ENCODE measurements at regions of chr11 and their contacts with region 1.

Region 1: DNA sequence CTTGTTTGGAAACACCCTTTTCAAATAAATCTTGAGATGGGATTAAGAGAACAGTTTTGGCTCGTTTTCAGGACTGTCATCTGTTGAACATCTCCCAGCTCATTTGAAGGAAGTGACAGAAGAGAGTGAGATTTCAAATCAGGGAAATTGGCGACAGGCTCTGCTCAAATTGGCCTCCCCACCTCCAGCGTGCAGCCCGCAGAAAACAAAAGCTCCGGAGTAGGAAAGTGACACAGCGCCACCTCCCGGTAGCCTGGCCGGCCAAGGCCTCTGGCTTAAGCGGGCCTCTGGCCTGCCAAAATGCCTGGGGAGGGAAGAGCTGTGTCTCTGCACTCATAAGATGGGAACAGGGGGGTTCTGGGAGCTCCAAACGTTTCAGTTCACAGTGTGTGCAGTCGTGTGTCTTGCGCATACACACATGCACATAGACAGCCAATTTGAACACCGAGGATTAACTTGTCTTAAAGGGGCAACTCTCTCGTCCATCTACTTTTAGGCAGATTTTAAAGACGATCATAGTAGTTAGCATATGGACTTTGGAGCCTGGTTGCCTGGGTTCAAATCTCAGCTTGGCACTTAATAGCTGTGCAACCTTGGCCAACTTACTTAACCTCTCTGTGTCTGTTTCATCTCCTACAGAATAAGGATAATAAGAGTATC is 132.7 kb upstream of the RCN1 start:
- DNase-seq: peak; percentile 21 to 61 (median 34)
- ATAC-seq: no peak
- H3K4me3 ChIP-seq: no peak overlapping the region
- H3K4me3 Mint-ChIP-seq: no peak overlapping the region
- H3K27ac ChIP-seq: no peak overlapping the region
- H3K27ac Mint-ChIP-seq: no peak overlapping the region
- H3K4me1 ChIP-seq: no peaks in the 10 kb centered on the region
- H3K4me1 Mint-ChIP-seq: no peaks in the 10 kb centered on the region
- H3K27me3 ChIP-seq: no peaks in the 10 kb centered on the region
- H3K27me3 Mint-ChIP-seq: no peaks in the 10 kb centered on the region
- CTCF ChIP-seq: peak; percentile 23

Region 2: GRCh38 chr11:31233424-31233823 is 724.8 kb before region 1 on chr11:
- CTCF ChIA-PET with region 1: no interaction called
- POLR2A ChIA-PET with region 1: no interaction called
- intact Hi-C with region 1: loop called (anchors 5 kb)
- DNase-seq: no peak
- ATAC-seq: no peak
- H3K4me3 ChIP-seq: no peak overlapping the region
- H3K4me3 Mint-ChIP-seq: no peak overlapping the region
- H3K27ac ChIP-seq: no peak overlapping the region
- H3K27ac Mint-ChIP-seq: no peak overlapping the region
- H3K4me1 ChIP-seq: no peaks in the 10 kb centered on the region
- H3K4me1 Mint-ChIP-seq: no peaks in the 10 kb centered on the region
- H3K27me3 ChIP-seq: no peaks in the 10 kb centered on the region
- H3K27me3 Mint-ChIP-seq: peaks cover 5% of the 10 kb centered on the region
- CTCF ChIP-seq: no peak

Region 3: GRCh38 chr11:31240338-31240904 is 717.8 kb before region 1 on chr11:
- CTCF ChIA-PET with region 1: no interaction called
- POLR2A ChIA-PET with region 1: no interaction called
- intact Hi-C with region 1: loop called in 1 of 2 experiments (anchors 5 kb)
- DNase-seq: peak in 7 of 14 experiments; percentile 0 to 59 (median 27)
- ATAC-seq: no peak
- H3K4me3 ChIP-seq: no peak overlapping the region
- H3K4me3 Mint-ChIP-seq: no peak overlapping the region
- H3K27ac ChIP-seq: no peak overlapping the region
- H3K27ac Mint-ChIP-seq: no peak overlapping the region
- H3K4me1 ChIP-seq: no peaks in the 10 kb centered on the region
- H3K4me1 Mint-ChIP-seq: no peaks in the 10 kb centered on the region
- H3K27me3 ChIP-seq: no peaks in the 10 kb centered on the region
- H3K27me3 Mint-ChIP-seq: peaks cover 5% of the 10 kb centered on the region
- CTCF ChIP-seq: peak; percentile 64

Region 4: GRCh38 chr11:31397239-31397834 is 560.9 kb before region 1 on chr11:
- CTCF ChIA-PET with region 1: interaction called, 3 read pairs
- POLR2A ChIA-PET with region 1: no interaction called
- intact Hi-C with region 1: loop called in 1 of 2 experiments (anchors 5 kb)
- DNase-seq: peak in 3 of 14 experiments; percentile 33 to 45 (median 38)
- ATAC-seq: no peak
- H3K4me3 ChIP-seq: no peak overlapping the region
- H3K4me3 Mint-ChIP-seq: no peak overlapping the region
- H3K27ac ChIP-seq: no peak overlapping the region
- H3K27ac Mint-ChIP-seq: no peak overlapping the region
- H3K4me1 ChIP-seq: no peaks in the 10 kb centered on the region
- H3K4me1 Mint-ChIP-seq: no peaks in the 10 kb centered on the region
- H3K27me3 ChIP-seq: no peaks in the 10 kb centered on the region
- H3K27me3 Mint-ChIP-seq: no peaks in the 10 kb centered on the region
- CTCF ChIP-seq: peak; percentile 60

Region 5: DNA sequence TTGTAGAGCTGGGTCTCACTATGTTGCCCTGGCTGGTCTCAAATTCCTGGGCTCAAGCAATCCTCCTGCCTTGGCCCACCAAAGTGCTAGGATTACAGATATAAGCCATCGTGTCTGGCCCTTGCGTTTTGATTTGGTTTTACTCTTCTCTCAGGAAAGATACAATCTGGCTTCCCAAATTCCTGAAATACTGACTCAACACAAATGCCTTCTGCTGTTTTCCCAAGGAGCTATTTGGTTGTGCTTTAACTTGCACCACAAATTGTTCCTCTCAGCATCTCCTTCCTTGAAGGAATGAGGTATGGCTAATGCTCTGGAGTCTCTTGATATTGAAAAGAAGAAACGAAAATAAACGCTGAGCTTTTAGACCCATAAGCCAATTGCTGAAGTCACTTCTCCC is 37.1 kb before region 1 on chr11:
- CTCF ChIA-PET with region 1: no interaction called
- POLR2A ChIA-PET with region 1: no interaction called
- intact Hi-C with region 1: loop called in 1 of 2 experiments (anchors 2 kb)
- DNase-seq: no peak
- ATAC-seq: no peak
- H3K4me3 ChIP-seq: no peak overlapping the region
- H3K4me3 Mint-ChIP-seq: no peak overlapping the region
- H3K27ac ChIP-seq: no peak overlapping the region
- H3K27ac Mint-ChIP-seq: no peak overlapping the region
- H3K4me1 ChIP-seq: no peaks in the 10 kb centered on the region
- H3K4me1 Mint-ChIP-seq: no peaks in the 10 kb centered on the region
- H3K27me3 ChIP-seq: peaks cover 0 to 3% of the 10 kb centered on the region in 2 experiments
- H3K27me3 Mint-ChIP-seq: peaks cover 42% of the 10 kb centered on the region
- CTCF ChIP-seq: no peak

Region 6: GRCh38 chr11:31981457-31981856 is 23.3 kb after region 1 on chr11:
- CTCF ChIA-PET with region 1: no interaction called
- POLR2A ChIA-PET with region 1: no interaction called
- intact Hi-C with region 1: no loop called
- DNase-seq: no peak
- ATAC-seq: no peak
- H3K4me3 ChIP-seq: no peak overlapping the region
- H3K4me3 Mint-ChIP-seq: no peak overlapping the region
- H3K27ac ChIP-seq: no peak overlapping the region
- H3K27ac Mint-ChIP-seq: no peak overlapping the region
- H3K4me1 ChIP-seq: no peaks in the 10 kb centered on the region
- H3K4me1 Mint-ChIP-seq: no peaks in the 10 kb centered on the region
- H3K27me3 ChIP-seq: peaks cover 20 to 22% of the 10 kb centered on the region in 2 experiments
- H3K27me3 Mint-ChIP-seq: peaks cover 59% of the 10 kb centered on the region
- CTCF ChIP-seq: no peak

Region 7: GRCh38 chr11:32105871-32106560 is 147.8 kb after region 1 on chr11:
- CTCF ChIA-PET with region 1: no interaction called
- POLR2A ChIA-PET with region 1: no interaction called
- intact Hi-C with region 1: no loop called
- DNase-seq: no peak
- ATAC-seq: no peak
- H3K4me3 ChIP-seq: no peak overlapping the region
- H3K4me3 Mint-ChIP-seq: no peak overlapping the region
- H3K27ac ChIP-seq: no peak overlapping the region
- H3K27ac Mint-ChIP-seq: no peak overlapping the region
- H3K4me1 ChIP-seq: no peaks in the 10 kb centered on the region
- H3K4me1 Mint-ChIP-seq: no peaks in the 10 kb centered on the region
- H3K27me3 ChIP-seq: no peaks in the 10 kb centered on the region
- H3K27me3 Mint-ChIP-seq: no peaks in the 10 kb centered on the region
- CTCF ChIP-seq: no peak